PC-9 (cell line): ENCODE measurements at regions of chr5 and their contacts with region 1.

Region 1: DNA sequence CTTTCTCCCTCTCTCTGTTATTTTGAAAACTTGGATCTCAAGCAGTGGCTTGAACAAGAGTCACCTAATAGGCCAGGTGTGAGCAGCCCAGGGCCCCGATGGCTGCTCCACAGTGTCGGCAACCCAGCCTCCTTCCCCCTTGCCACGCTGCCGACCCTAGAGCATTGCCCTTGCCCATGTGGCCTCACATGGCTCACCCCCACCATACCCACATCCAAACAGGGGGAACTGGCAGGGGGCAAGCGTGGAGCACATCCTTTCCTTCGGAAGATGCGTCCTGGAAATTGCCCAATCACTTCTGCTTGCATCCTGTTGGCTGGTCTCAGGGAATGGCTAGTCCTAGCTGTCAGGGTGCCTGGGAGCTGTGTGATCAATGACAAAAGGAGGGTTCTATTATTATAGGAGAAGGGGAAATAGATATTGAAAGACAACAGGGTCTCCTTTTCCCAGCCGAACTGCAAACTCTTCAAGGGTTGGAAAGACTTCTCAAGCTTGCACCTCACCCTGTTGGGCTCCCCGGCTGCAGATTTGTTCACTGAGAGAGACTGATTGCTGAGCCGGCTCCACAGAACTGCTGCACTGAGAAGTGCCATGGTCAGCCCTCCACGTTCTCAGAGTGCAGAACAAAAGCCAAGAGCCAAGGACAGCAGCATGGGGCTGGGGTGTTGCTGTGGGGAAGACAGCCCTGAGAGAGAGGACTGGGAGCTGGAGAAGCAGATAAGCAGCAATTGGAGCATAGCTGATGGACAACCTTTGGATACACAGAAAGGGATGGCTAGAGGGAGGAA is 8.3 kb upstream of the TIFAB start:
- DNase-seq: no peak
- H3K4me3 ChIP-seq: no peak overlapping the region
- H3K27ac ChIP-seq: no peak overlapping the region
- H3K4me1 ChIP-seq: no peaks in the 10 kb centered on the region
- H3K27me3 ChIP-seq: peaks cover 69% of the 10 kb centered on the region
- CTCF ChIP-seq: no peak

Region 2: GRCh38 chr5:133539818-133540217 is 1920.6 kb before region 1 on chr5:
- CTCF ChIA-PET with region 1: interaction called, 10 read pairs
- POLR2A ChIA-PET with region 1: no interaction called
- intact Hi-C with region 1: no loop called
- DNase-seq: no peak
- H3K4me3 ChIP-seq: no peak overlapping the region
- H3K27ac ChIP-seq: no peak overlapping the region
- H3K4me1 ChIP-seq: no peaks in the 10 kb centered on the region
- H3K27me3 ChIP-seq: no peaks in the 10 kb centered on the region
- CTCF ChIP-seq: no peak

Region 3: DNA sequence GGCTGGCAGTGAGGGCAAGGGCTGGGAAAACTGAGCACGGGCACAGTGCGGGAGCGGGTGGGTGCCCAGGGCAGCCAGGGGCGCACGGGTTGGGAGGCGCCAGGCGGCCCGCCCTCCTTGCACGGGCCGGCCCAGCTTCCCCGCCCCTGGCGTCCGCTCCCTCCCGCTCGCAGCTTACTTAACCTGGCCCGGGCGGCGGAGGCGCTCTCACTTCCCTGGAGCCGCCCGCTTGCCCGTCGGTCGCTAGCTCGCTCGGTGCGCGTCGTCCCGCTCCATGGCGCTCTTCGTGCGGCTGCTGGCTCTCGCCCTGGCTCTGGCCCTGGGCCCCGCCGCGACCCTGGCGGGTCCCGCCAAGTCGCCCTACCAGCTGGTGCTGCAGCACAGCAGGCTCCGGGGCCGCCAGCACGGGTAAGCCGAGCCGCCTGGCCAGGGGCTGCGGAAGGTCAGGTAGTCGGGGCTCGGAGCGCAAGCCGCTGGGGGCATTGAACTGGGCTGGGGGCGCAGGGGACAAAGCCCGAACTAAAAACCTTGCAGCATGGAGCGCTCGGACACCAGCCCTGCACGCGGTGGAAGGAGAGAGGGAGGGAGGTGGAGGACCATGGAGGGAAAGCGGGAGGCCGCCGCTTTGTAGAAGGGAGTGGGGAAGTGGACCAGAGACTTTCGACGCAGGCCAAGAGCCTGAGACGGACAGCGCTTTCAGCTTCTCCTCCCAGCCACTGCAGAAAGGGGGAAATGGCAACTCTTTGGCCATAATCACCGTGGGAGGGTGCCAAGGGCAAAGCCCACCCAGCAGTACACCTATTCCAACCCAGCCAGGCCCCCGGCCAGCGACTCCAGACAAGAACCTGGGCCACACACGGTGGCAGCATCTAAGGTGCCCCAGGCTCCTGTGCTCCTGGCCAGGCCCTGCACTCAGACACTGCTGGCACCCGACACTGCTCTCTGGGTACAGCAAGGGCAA is 568.6 kb after region 1 on chr5 and contains the start of gene TGFBI:
- CTCF ChIA-PET with region 1: no interaction called
- POLR2A ChIA-PET with region 1: no interaction called
- intact Hi-C with region 1: no loop called
- DNase-seq: peak; percentile 55 to 75
- H3K4me3 ChIP-seq: peak within 1 kb of the TSS; percentile 94
- H3K27ac ChIP-seq: peak within 1 kb of the TSS; percentile 38; the same call in 1 of the 2 replicates
- H3K4me1 ChIP-seq: peaks cover 54% of the 10 kb centered on the region
- H3K27me3 ChIP-seq: no peaks in the 10 kb centered on the region
- CTCF ChIP-seq: no peak
- total RNA-seq, gene TGFBI: 430 and 437 TPM in 2 replicates